Natural killer cell (primary cell): ENCODE measurements at regions of chr2 and their contacts with region 1.

Region 1: GRCh38 chr2:161063157-161063954 is 96.9 kb upstream of the TANK start:
- DNase-seq: peak; percentile 27 to 81
- ATAC-seq: peak; percentile 87 to 96 (median 92)
- H3K4me3 ChIP-seq: no peak overlapping the region
- H3K4me3 Mint-ChIP-seq: no peak overlapping the region
- H3K27ac ChIP-seq: no peak overlapping the region
- H3K27ac Mint-ChIP-seq: no peak overlapping the region
- H3K4me1 ChIP-seq: no peaks in the 10 kb centered on the region
- H3K4me1 Mint-ChIP-seq: peaks cover 6% of the 10 kb centered on the region in 2 donors
- H3K27me3 ChIP-seq: no peaks in the 10 kb centered on the region
- H3K27me3 Mint-ChIP-seq: peaks cover 2 to 39% of the 10 kb centered on the region in 2 donors
- CTCF ChIP-seq: peak; percentile 97

Region 2: DNA sequence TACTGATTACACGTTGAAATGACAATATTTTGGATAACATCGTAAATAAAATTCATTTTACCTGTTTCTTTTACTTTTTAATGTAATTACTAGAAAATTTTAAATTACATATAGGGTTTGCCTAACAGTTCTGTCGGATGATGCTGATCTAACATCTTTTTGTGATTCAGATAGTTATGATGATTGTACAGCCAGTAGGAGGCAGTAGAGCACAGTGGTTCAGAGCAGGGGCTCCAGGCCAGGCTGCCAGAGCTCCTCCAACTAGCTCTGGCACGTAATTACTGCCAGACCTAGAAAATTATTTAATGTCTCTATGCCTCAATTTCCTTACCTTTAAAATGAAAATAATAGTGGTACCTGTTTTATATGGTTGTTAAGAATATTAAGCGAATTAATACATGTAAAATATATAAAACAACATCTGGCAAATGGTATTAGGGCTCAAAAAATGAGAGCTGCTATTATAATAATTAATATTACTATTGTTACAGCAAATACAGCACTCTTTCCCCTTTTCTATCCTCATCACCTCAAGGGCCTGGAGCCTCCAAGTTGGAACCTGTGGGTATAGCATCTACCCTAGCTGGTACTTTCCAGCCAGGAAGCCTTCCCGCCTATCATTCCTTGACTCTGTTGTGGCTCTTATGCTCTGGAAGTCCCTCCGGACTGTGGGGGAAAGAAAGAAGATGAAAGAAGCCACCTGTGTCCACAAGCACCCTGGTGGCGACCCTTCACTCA is 953.3 kb before region 1 on chr2:
- intact Hi-C with region 1: loop called (anchors 5 kb)
- DNase-seq: peak in 1 of 2 donors; percentile 80
- ATAC-seq: peak; percentile 76 to 91 (median 79)
- H3K4me3 ChIP-seq: no peak overlapping the region
- H3K4me3 Mint-ChIP-seq: no peak overlapping the region
- H3K27ac ChIP-seq: no peak overlapping the region
- H3K27ac Mint-ChIP-seq: no peak overlapping the region
- H3K4me1 ChIP-seq: no peaks in the 10 kb centered on the region
- H3K4me1 Mint-ChIP-seq: no peaks in the 10 kb centered on the region
- H3K27me3 ChIP-seq: no peaks in the 10 kb centered on the region
- H3K27me3 Mint-ChIP-seq: peaks cover 0 to 7% of the 10 kb centered on the region in 2 donors
- CTCF ChIP-seq: peak; percentile 74

Region 3: GRCh38 chr2:160994141-160995002 is 69.0 kb before region 1 on chr2:
- intact Hi-C with region 1: no loop called
- DNase-seq: peak; percentile 36 to 89
- ATAC-seq: peak; percentile 85 to 95 (median 94)
- H3K4me3 ChIP-seq: no peak overlapping the region
- H3K4me3 Mint-ChIP-seq: no peak overlapping the region
- H3K27ac ChIP-seq: no peak overlapping the region
- H3K27ac Mint-ChIP-seq: peak overlapping the region in 1 of 2 donors; percentile 5
- H3K4me1 ChIP-seq: no peaks in the 10 kb centered on the region
- H3K4me1 Mint-ChIP-seq: peaks cover 9 to 10% of the 10 kb centered on the region in 2 donors
- H3K27me3 ChIP-seq: no peaks in the 10 kb centered on the region
- H3K27me3 Mint-ChIP-seq: no peaks in the 10 kb centered on the region
- CTCF ChIP-seq: peak; percentile 87

Region 4: GRCh38 chr2:161199912-161200701 is 136.8 kb after region 1 on chr2:
- intact Hi-C with region 1: no loop called
- DNase-seq: peak in 1 of 2 donors; percentile 29
- ATAC-seq: peak; percentile 57 to 68 (median 61)
- H3K4me3 ChIP-seq: no peak overlapping the region
- H3K4me3 Mint-ChIP-seq: peak overlapping the region; percentile 41
- H3K27ac ChIP-seq: no peak overlapping the region
- H3K27ac Mint-ChIP-seq: peak overlapping the region; percentile 29 to 65
- H3K4me1 ChIP-seq: peaks cover 4% of the 10 kb centered on the region
- H3K4me1 Mint-ChIP-seq: peaks cover 26 to 35% of the 10 kb centered on the region in 2 donors
- H3K27me3 ChIP-seq: no peaks in the 10 kb centered on the region
- H3K27me3 Mint-ChIP-seq: no peaks in the 10 kb centered on the region
- CTCF ChIP-seq: no peak